ENCODE measurements at regions of chr6 and their contacts with region 1.

Region 1: GRCh38 chr6:42661540-42662153 is 60.8 kb downstream of the PRPH2 start:
- DNase-seq: peak; percentile 91
- H3K4me3 ChIP-seq: no peak overlapping the region
- H3K27ac ChIP-seq: no peak overlapping the region
- H3K4me1 ChIP-seq: peaks cover 2% of the 10 kb centered on the region
- H3K27me3 ChIP-seq: no peaks in the 10 kb centered on the region
- CTCF ChIP-seq: peak; percentile 86 to 97 (median 87)
- POLR2A ChIP-seq: no peak

Region 2: DNA sequence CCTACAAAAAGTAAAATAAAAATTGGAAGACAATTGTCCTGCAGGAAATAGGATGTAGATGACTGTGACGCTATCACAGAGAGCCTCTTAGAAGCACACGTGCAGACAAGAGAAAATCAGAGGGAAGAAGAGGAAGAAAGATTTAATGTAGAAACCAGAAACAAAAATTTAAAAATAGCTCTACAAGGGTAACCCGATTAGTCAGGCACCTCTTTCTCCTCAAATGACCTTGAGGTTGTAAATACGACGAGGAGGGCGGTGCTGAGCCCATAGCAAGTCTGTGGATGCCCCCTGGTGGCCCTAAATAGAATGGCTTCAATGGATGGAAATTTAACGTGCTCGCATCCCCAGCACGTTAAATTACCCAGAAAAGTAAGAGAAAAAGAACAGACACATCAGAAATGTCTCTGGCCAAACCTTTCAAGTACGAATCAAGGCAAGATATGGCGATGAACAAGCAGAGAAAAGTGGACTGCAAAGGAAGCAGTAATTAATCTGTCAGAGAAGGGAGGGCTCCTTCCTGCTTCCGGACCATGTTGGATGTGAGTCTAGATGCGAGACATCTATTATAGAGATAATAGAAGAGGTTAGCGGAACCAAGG is 64.9 kb after region 1 on chr6:
- intact Hi-C with region 1: loop called (anchors 10 kb)
- DNase-seq: peak; percentile 92
- H3K4me3 ChIP-seq: peak overlapping the region; percentile 61 to 62
- H3K27ac ChIP-seq: peak overlapping the region; percentile 34 to 84
- H3K4me1 ChIP-seq: peaks cover 8% of the 10 kb centered on the region
- H3K27me3 ChIP-seq: no peaks in the 10 kb centered on the region
- CTCF ChIP-seq: peak; percentile 90 to 94 (median 91)
- POLR2A ChIP-seq: no peak

Region 3: GRCh38 chr6:42791706-42792320 is 130.2 kb after region 1 on chr6:
- intact Hi-C with region 1: no loop called
- DNase-seq: no peak
- H3K4me3 ChIP-seq: no peak overlapping the region
- H3K27ac ChIP-seq: no peak overlapping the region
- H3K4me1 ChIP-seq: peaks cover 23% of the 10 kb centered on the region
- H3K27me3 ChIP-seq: no peaks in the 10 kb centered on the region
- CTCF ChIP-seq: no peak
- POLR2A ChIP-seq: no peak

Region 4: GRCh38 chr6:42879372-42880239 is 218.0 kb after region 1 on chr6 and contains the start of gene RPL7L1:
- intact Hi-C with region 1: loop called (anchors 10 kb)
- DNase-seq: peak; percentile 92
- H3K4me3 ChIP-seq: peak within 1 kb of the TSS; percentile 75 to 83
- H3K27ac ChIP-seq: peak within 1 kb of the TSS; percentile 79 to 98
- H3K4me1 ChIP-seq: peaks cover 16% of the 10 kb centered on the region
- H3K27me3 ChIP-seq: no peaks in the 10 kb centered on the region
- CTCF ChIP-seq: peak in 1 of 3 experiments; percentile 48
- POLR2A ChIP-seq: no peak
- total RNA-seq, gene RPL7L1: 62.6 to 66.8 TPM

Measured in testis (tissue), 5 donors.